ENCODE measurements at regions of chr1 and their contacts with region 1.

Region 1: GRCh38 chr1:219416594-219417238 is 196.2 kb downstream of the ZC3H11B start:
- DNase-seq: peak; percentile 28
- ATAC-seq: peak; percentile 65
- H3K4me3 Mint-ChIP-seq: no peak overlapping the region
- H3K27ac Mint-ChIP-seq: no peak overlapping the region
- H3K4me1 Mint-ChIP-seq: no peaks in the 10 kb centered on the region
- H3K27me3 Mint-ChIP-seq: no peaks in the 10 kb centered on the region
- CTCF ChIP-seq: peak; percentile 31

Region 2: GRCh38 chr1:218339267-218339831 is 1077.4 kb before region 1 on chr1:
- CTCF ChIA-PET with region 1: interaction called, 3 read pairs
- POLR2A ChIA-PET with region 1: no interaction called
- intact Hi-C with region 1: loop called (anchors 2 kb)
- DNase-seq: no peak
- ATAC-seq: peak; percentile 28
- H3K4me3 Mint-ChIP-seq: no peak overlapping the region
- H3K27ac Mint-ChIP-seq: no peak overlapping the region
- H3K4me1 Mint-ChIP-seq: no peaks in the 10 kb centered on the region
- H3K27me3 Mint-ChIP-seq: no peaks in the 10 kb centered on the region
- CTCF ChIP-seq: peak; percentile 51

Region 3: GRCh38 chr1:219209578-219209977 is 207.1 kb before region 1 on chr1:
- CTCF ChIA-PET with region 1: no interaction called
- POLR2A ChIA-PET with region 1: no interaction called
- intact Hi-C with region 1: loop called (anchors 1 kb)
- DNase-seq: no peak
- ATAC-seq: no peak
- H3K4me3 Mint-ChIP-seq: no peak overlapping the region
- H3K27ac Mint-ChIP-seq: no peak overlapping the region
- H3K4me1 Mint-ChIP-seq: no peaks in the 10 kb centered on the region
- H3K27me3 Mint-ChIP-seq: no peaks in the 10 kb centered on the region
- CTCF ChIP-seq: no peak

Region 4: DNA sequence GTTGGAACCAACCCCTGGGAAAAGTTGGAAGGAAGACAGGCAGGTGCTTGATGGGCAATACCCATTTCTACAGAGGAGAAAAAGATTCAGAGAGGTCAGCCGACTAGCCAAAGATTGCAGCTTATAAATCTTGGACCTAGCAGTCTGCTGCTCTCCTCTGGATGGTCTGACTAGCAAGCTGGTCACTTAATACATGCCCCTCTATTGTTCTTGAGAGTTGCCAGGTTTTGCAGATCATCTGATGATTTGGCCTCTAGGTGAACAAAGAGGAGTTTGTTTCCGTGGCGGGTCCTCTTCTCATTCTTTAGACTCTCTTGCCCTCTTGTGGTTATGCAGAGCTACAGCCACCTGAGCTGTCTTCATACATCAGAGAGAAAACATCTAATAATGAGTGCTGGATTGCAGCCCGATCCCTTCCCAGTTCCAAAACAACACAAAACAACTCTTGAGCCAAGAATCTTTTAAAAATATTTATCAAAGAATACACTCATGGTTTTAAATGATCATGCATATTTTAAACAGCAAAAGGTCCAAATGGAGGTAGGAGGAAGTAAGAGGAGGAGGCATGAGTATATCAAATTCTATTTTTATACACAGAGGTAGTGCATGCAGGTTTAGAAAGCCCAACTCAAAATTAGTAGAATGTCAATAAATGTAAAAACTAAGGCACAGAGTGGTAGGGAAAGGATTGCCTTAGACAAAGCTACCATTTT is 395.9 kb after region 1 on chr1:
- CTCF ChIA-PET with region 1: no interaction called
- POLR2A ChIA-PET with region 1: no interaction called
- intact Hi-C with region 1: loop called (anchors 10 kb)
- DNase-seq: no peak
- ATAC-seq: peak; percentile 45
- H3K4me3 Mint-ChIP-seq: no peak overlapping the region
- H3K27ac Mint-ChIP-seq: no peak overlapping the region
- H3K4me1 Mint-ChIP-seq: no peaks in the 10 kb centered on the region
- H3K27me3 Mint-ChIP-seq: peaks cover 10% of the 10 kb centered on the region
- CTCF ChIP-seq: no peak

Measured in activated B cell treated with CpG ODN at 0.5 μM for 24 hours (primary cell).